Sigmoid colon (tissue), 7 donors: ENCODE measurements at regions of chr9 and their contacts with region 1.

Region 1: DNA sequence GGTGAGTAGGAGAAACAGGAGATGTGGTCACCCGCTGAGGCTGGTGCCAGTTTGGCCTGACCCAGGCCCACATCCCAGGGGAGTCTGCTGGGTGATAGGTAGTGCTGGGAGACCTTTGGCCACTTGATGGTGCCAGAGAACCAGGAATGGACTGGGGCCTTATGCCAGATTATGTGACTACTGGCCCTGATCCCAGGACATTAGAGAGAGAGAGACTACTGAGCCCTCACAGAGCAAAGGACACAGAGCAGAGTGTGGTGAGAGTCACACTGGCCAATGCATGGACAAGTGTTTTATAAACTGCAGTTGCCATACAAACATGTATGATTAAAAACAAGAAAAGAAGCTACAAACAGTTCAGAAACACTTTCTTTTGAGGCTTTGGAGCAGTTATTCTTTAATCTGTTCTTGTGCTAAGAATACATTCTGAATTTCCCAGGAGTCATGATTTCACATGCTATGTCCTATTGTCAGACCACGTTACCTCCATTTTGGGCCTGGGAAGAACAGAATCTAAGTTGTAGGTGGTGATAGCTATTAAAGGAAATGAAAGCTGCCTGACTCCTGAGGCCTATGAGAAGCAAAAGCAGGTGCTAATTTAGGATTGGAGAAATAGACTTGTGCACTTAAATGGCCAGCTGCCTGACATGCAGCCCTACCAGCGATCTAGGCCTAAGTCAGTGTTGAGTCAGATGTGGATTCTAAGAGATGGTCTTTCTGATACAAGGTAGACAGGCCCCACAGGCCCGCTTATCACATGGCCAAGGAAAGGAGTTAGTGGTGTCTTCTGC is 32.6 kb upstream of the TMOD1 start:
- DNase-seq: peak; percentile 92
- H3K4me3 ChIP-seq: no peak overlapping the region
- H3K27ac ChIP-seq: peak overlapping the region; percentile 66 to 82 (median 79)
- H3K4me1 ChIP-seq: peaks cover 0 to 15% (median 14%) of the 10 kb centered on the region in 4 donors
- H3K27me3 ChIP-seq: no peaks in the 10 kb centered on the region
- CTCF ChIP-seq: peak; percentile 79 to 91 (median 85)
- EP300 ChIP-seq: no peak
- POLR2A ChIP-seq: no peak

Region 2: GRCh38 chr9:97501177-97501971 is 32.5 kb after region 1 on chr9 and contains the start of gene TMOD1:
- intact Hi-C with region 1: loop called (anchors 2 kb)
- DNase-seq: peak; percentile 86
- H3K4me3 ChIP-seq: peak within 1 kb of the TSS; percentile 78 to 96 (median 86)
- H3K27ac ChIP-seq: peak within 1 kb of the TSS; percentile 84 to 92 (median 92)
- H3K4me1 ChIP-seq: peaks cover 0 to 36% (median 34%) of the 10 kb centered on the region in 4 donors
- H3K27me3 ChIP-seq: no peaks in the 10 kb centered on the region
- CTCF ChIP-seq: no peak
- EP300 ChIP-seq: no peak
- POLR2A ChIP-seq: peak in 1 of 2 donors; percentile 35
- total RNA-seq, gene TMOD1: 28.5 to 56.8 (median 38.5) TPM

Region 3: DNA sequence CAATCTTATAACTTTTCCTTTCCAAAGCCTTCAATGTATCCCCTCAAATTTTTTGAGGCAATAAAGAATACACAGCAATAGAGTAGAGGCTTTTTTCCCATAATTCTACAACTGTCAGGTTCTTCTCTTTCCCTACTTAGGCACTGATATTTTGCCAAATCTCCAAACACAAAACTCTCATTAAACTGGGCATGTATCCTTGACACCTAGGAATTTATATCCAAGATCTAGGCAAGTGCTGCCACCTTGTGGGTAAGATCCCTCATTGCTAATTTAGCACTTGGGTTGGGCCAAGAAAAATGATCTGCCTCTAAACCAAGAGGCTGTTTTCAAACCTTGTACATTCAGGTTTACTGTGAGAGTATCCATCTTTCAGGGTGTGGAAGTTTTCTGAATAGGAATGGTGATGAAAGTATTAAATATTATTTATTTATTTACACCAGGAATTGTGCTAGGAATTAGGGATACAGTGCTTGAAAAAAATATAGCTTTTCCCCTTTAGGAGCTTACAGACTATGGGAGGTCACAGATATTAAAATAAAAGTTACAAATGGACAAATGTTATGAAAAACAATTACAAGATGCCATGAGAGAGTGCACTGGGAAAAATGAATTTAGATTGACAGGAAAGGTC is 146.7 kb after region 1 on chr9:
- intact Hi-C with region 1: loop called (anchors 1 kb)
- DNase-seq: peak; percentile 81
- H3K4me3 ChIP-seq: no peak overlapping the region
- H3K27ac ChIP-seq: peak overlapping the region in 1 of 4 donors; percentile 13
- H3K4me1 ChIP-seq: peaks cover 0 to 11% (median 4%) of the 10 kb centered on the region in 4 donors
- H3K27me3 ChIP-seq: no peaks in the 10 kb centered on the region
- CTCF ChIP-seq: peak; percentile 69 to 84 (median 78)
- EP300 ChIP-seq: no peak
- POLR2A ChIP-seq: no peak